OCI-LY7 (cell line): ENCODE measurements at regions of chr11 and their contacts with region 1.

Region 1: GRCh38 chr11:102293873-102294601 is 23.2 kb upstream of the BIRC3 start:
- DNase-seq: peak; percentile 86
- H3K4me3 ChIP-seq: peak overlapping the region; percentile 37
- H3K27ac ChIP-seq: no peak overlapping the region
- H3K4me1 ChIP-seq: peaks cover 37% of the 10 kb centered on the region
- CTCF ChIP-seq: peak; percentile 93

Region 2: GRCh38 chr11:102306048-102306585 is 12.1 kb after region 1 on chr11:
- CTCF ChIA-PET with region 1: interaction called, 10 read pairs
- POLR2A ChIA-PET with region 1: interaction called, 102 read pairs
- intact Hi-C with region 1: loop called (anchors 1 kb)
- DNase-seq: no peak
- H3K4me3 ChIP-seq: peak overlapping the region; percentile 39
- H3K27ac ChIP-seq: peak overlapping the region; percentile 82
- H3K4me1 ChIP-seq: peaks cover 40% of the 10 kb centered on the region
- CTCF ChIP-seq: peak; percentile 71